Dorsolateral prefrontal cortex (tissue), 120 donors: ENCODE measurements at regions of chr5 and their contacts with region 1.

Region 1: GRCh38 chr5:10353241-10354047 is at the start of gene MARCHF6:
- DNase-seq: peak; percentile 86 to 96 (median 94)
- H3K4me3 ChIP-seq: peak within 1 kb of the TSS; percentile 63 to 99 (median 91)
- H3K27ac ChIP-seq: peak within 1 kb of the TSS; percentile 54 to 99 (median 95)
- H3K27me3 ChIP-seq: no peaks in the 10 kb centered on the region
- CTCF ChIP-seq: peak in 27 of 56 donors; percentile 5 to 50 (median 23)
- total RNA-seq, gene MARCHF6: 195 to 408 (median 303) TPM

Region 2: GRCh38 chr5:10249948-10250803 is 103.3 kb before region 1 on chr5 and contains the start of gene CCT5:
- intact Hi-C with region 1: loop called (anchors 5 kb)
- DNase-seq: peak; percentile 75 to 91 (median 88)
- H3K4me3 ChIP-seq: peak within 1 kb of the TSS; percentile 73 to 100 (median 96)
- H3K27ac ChIP-seq: peak within 1 kb of the TSS; percentile 91 to 100 (median 98)
- H3K27me3 ChIP-seq: no peaks in the 10 kb centered on the region
- CTCF ChIP-seq: peak in 13 of 56 donors; percentile 3 to 31 (median 16)
- total RNA-seq, gene CCT5: 51.3 to 143 (median 92.4) TPM

Region 3: GRCh38 chr5:10339058-10339811 is 14.2 kb before region 1 on chr5:
- intact Hi-C with region 1: loop called in 1 of 2 experiments (anchors 2 kb)
- DNase-seq: peak in 9 of 10 donors; percentile 30 to 92 (median 79)
- H3K4me3 ChIP-seq: peak overlapping the region in 50 of 59 donors; percentile 4 to 52 (median 30)
- H3K27ac ChIP-seq: peak overlapping the region in 57 of 59 donors; percentile 19 to 93 (median 80)
- H3K27me3 ChIP-seq: no peaks in the 10 kb centered on the region
- CTCF ChIP-seq: no peak

Region 4: DNA sequence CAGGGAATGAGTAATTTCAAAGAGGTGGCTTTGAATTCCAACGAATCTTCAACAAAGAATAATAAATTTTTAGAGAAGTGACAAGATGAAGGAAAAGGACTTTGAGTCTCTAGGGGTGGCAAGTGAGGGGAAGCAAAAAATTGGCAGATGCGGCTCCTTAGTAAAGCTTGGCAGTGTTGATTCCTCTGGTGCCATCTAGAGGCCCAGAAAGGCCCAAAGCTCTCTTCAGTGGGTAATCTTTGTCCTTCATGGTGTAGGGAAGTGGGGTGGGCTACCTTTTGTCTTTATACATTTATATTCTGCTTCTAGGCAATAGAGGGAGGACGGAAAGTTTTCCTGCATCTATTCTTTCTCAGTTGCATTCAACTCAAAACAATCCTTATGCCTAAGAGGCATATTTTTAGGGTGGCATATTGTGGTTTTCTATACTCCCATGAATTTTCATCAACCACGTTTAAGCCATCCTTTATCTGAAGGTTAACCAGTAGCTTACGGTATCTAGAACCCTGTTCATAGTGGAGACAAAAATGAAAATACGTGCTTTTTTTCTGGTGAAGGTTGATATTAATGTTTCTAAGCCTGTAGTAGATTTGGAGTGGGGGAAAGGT is 70.8 kb after region 1 on chr5:
- intact Hi-C with region 1: loop called (anchors 5 kb)
- DNase-seq: peak in 4 of 10 donors; percentile 44 to 76 (median 53)
- H3K4me3 ChIP-seq: no peak overlapping the region
- H3K27ac ChIP-seq: peak overlapping the region in 5 of 59 donors; percentile 1 to 23 (median 13)
- H3K27me3 ChIP-seq: no peaks in the 10 kb centered on the region
- CTCF ChIP-seq: peak; percentile 6 to 83 (median 70)

Region 5: GRCh38 chr5:11013793-11014192 is 660.3 kb after region 1 on chr5:
- intact Hi-C with region 1: no loop called
- DNase-seq: no peak
- H3K4me3 ChIP-seq: no peak overlapping the region
- H3K27ac ChIP-seq: no peak overlapping the region
- H3K27me3 ChIP-seq: no peaks in the 10 kb centered on the region
- CTCF ChIP-seq: no peak